ENCODE measurements at regions of chr19 and their contacts with region 1.

Region 1: GRCh38 chr19:14901675-14902260 is 15.8 kb upstream of the OR7A17 start:
- DNase-seq: no peak
- H3K4me3 ChIP-seq: no peak overlapping the region
- H3K27ac ChIP-seq: no peak overlapping the region
- H3K4me1 ChIP-seq: no peaks in the 10 kb centered on the region
- H3K27me3 ChIP-seq: no peaks in the 10 kb centered on the region
- CTCF ChIP-seq: no peak
- POLR2A ChIP-seq: no peak

Region 2: DNA sequence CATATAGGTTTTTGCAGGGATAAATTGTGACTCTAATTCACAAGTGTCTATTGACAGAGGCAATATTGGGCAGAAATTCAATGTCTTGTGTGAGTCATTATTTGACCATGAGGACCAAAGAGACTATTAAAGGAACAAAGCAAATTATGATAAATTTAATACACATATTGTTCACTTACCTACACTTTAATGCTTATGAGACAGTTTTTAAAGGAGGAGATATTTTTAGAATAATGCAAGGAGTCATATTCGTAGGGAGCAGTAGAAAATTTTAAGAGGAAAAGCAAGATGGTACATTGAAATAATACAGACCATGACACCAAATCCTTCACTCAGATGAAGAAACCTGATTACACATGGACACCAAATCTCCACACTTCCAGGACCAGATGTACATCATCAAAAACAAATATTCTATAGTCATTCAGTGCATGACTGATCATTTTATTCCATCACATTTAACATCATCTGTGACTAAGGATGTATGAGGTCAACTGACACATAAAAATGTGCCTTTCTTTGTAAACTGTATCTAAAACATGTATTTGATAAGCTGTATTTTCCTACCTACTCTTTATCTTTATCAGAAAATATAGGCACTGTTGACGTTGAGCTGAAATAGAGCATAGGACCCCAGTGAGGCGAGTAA is 11.7 kb before region 1 on chr19:
- intact Hi-C with region 1: loop called (anchors 2 kb)
- DNase-seq: no peak
- H3K4me3 ChIP-seq: no peak overlapping the region
- H3K27ac ChIP-seq: no peak overlapping the region
- H3K4me1 ChIP-seq: no peaks in the 10 kb centered on the region
- H3K27me3 ChIP-seq: peaks cover 0 to 6% of the 10 kb centered on the region in 2 donors
- CTCF ChIP-seq: no peak
- POLR2A ChIP-seq: no peak